ENCODE measurements at regions of chrX and their contacts with region 1.

Region 1: GRCh38 chrX:74343343-74344279 is 39.6 kb downstream of the ZCCHC13 start:
- DNase-seq: peak in 12 of 14 experiments; percentile 6 to 75 (median 20)
- ATAC-seq: no peak
- H3K4me3 ChIP-seq: no peak overlapping the region
- H3K4me3 Mint-ChIP-seq: no peak overlapping the region
- H3K27ac ChIP-seq: no peak overlapping the region
- H3K27ac Mint-ChIP-seq: no peak overlapping the region
- H3K4me1 ChIP-seq: peaks cover 2% of the 10 kb centered on the region
- H3K4me1 Mint-ChIP-seq: peaks cover 4% of the 10 kb centered on the region
- H3K27me3 ChIP-seq: no peaks in the 10 kb centered on the region
- H3K27me3 Mint-ChIP-seq: peaks cover 4% of the 10 kb centered on the region
- CTCF ChIP-seq: peak; percentile 52

Region 2: DNA sequence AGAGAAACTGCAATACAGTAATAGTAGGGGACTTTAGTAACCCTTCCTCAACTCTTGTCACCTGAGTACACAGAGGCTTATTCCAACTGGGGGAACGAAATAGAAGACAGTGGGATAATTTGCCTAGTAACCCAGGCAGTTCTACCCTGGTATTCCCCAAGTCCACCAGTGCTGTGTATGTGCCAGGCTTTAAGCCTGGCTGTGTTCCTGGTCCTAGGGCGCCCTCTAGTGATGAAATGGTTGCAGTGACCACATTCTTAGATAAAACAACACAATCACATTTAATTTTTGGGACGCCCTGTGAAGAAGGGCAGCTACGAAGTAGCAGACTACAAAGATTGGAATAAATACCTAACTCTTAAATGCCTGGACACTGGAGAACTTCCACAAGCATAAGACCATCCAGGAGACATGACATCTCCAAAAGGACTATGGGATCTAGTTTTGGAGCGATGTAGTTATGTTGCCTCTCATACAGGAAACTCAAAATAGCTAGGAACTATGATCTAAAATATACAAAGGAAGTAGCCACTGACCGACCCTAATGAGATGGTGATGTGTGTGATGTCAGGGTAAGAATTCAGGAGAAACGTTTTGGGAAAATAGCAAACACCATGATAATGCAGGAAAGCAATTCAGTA is 328.1 kb before region 1 on chrX:
- CTCF ChIA-PET with region 1: no interaction called
- POLR2A ChIA-PET with region 1: no interaction called
- intact Hi-C with region 1: loop called in 1 of 2 experiments (anchors 5 kb)
- DNase-seq: peak; percentile 33 to 80 (median 51)
- ATAC-seq: peak; percentile 55
- H3K4me3 ChIP-seq: no peak overlapping the region
- H3K4me3 Mint-ChIP-seq: no peak overlapping the region
- H3K27ac ChIP-seq: no peak overlapping the region
- H3K27ac Mint-ChIP-seq: no peak overlapping the region
- H3K4me1 ChIP-seq: no peaks in the 10 kb centered on the region
- H3K4me1 Mint-ChIP-seq: peaks cover 5% of the 10 kb centered on the region
- H3K27me3 ChIP-seq: no peaks in the 10 kb centered on the region
- H3K27me3 Mint-ChIP-seq: no peaks in the 10 kb centered on the region
- CTCF ChIP-seq: peak; percentile 78

Region 3: GRCh38 chrX:74133156-74133796 is 210.3 kb before region 1 on chrX:
- CTCF ChIA-PET with region 1: no interaction called
- POLR2A ChIA-PET with region 1: no interaction called
- intact Hi-C with region 1: loop called (anchors 2 to 5 kb)
- DNase-seq: peak in 4 of 14 experiments; percentile 24 to 65 (median 56)
- ATAC-seq: no peak
- H3K4me3 ChIP-seq: no peak overlapping the region
- H3K4me3 Mint-ChIP-seq: no peak overlapping the region
- H3K27ac ChIP-seq: no peak overlapping the region
- H3K27ac Mint-ChIP-seq: no peak overlapping the region
- H3K4me1 ChIP-seq: no peaks in the 10 kb centered on the region
- H3K4me1 Mint-ChIP-seq: no peaks in the 10 kb centered on the region
- H3K27me3 ChIP-seq: no peaks in the 10 kb centered on the region
- H3K27me3 Mint-ChIP-seq: no peaks in the 10 kb centered on the region
- CTCF ChIP-seq: peak; percentile 68

Region 4: GRCh38 chrX:74147439-74147838 is 196.2 kb before region 1 on chrX:
- CTCF ChIA-PET with region 1: no interaction called
- POLR2A ChIA-PET with region 1: no interaction called
- intact Hi-C with region 1: no loop called
- DNase-seq: no peak
- ATAC-seq: no peak
- H3K4me3 ChIP-seq: no peak overlapping the region
- H3K4me3 Mint-ChIP-seq: no peak overlapping the region
- H3K27ac ChIP-seq: no peak overlapping the region
- H3K27ac Mint-ChIP-seq: no peak overlapping the region
- H3K4me1 ChIP-seq: no peaks in the 10 kb centered on the region
- H3K4me1 Mint-ChIP-seq: no peaks in the 10 kb centered on the region
- H3K27me3 ChIP-seq: no peaks in the 10 kb centered on the region
- H3K27me3 Mint-ChIP-seq: no peaks in the 10 kb centered on the region
- CTCF ChIP-seq: no peak

Region 5: GRCh38 chrX:74232859-74233258 is 110.8 kb before region 1 on chrX:
- CTCF ChIA-PET with region 1: no interaction called
- POLR2A ChIA-PET with region 1: no interaction called
- intact Hi-C with region 1: loop called in 1 of 2 experiments (anchors 10 kb)
- DNase-seq: peak in 1 of 14 experiments; percentile 3
- ATAC-seq: no peak
- H3K4me3 ChIP-seq: no peak overlapping the region
- H3K4me3 Mint-ChIP-seq: no peak overlapping the region
- H3K27ac ChIP-seq: no peak overlapping the region
- H3K27ac Mint-ChIP-seq: no peak overlapping the region
- H3K4me1 ChIP-seq: no peaks in the 10 kb centered on the region
- H3K4me1 Mint-ChIP-seq: no peaks in the 10 kb centered on the region
- H3K27me3 ChIP-seq: no peaks in the 10 kb centered on the region
- H3K27me3 Mint-ChIP-seq: no peaks in the 10 kb centered on the region
- CTCF ChIP-seq: no peak